ENCODE measurements at regions of chr2 and their contacts with region 1.

Region 1: GRCh38 chr2:96509114-96509846 is 4.1 kb upstream of the NEURL3 start:
- DNase-seq: peak in 8 of 9 experiments; percentile 35 to 73 (median 56)
- ATAC-seq: no peak
- H3K4me3 ChIP-seq: no peak overlapping the region
- H3K4me3 Mint-ChIP-seq: no peak overlapping the region
- H3K27ac ChIP-seq: no peak overlapping the region
- H3K27ac Mint-ChIP-seq: no peak overlapping the region
- H3K4me1 ChIP-seq: peaks cover 17% of the 10 kb centered on the region
- H3K4me1 Mint-ChIP-seq: peaks cover 10% of the 10 kb centered on the region
- H3K27me3 ChIP-seq: peaks cover 0 to 5% of the 10 kb centered on the region in 2 experiments
- H3K27me3 Mint-ChIP-seq: peaks cover 13% of the 10 kb centered on the region
- CTCF ChIP-seq: peak; percentile 45

Region 2: DNA sequence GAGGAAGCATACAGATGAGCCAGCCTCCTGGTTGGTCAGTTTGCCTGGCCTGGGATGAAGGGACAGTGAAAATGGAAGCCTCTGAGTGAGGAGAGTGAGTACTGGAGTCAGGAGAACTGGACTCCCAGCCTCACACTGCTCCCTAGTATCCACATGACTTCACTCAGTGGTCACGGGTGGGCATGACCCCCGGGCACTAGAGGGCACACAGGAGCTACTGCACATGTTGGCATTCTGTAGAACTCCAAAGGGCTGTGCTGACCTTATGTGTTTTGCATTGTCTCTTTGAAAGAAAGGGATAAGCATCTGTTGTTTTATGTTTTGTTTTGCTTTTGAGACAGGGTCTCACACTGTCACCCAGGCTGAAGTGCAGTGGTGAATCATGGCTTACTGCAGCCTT is 150.0 kb before region 1 on chr2:
- CTCF ChIA-PET with region 1: interaction called, 8 read pairs
- POLR2A ChIA-PET with region 1: no interaction called
- intact Hi-C with region 1: loop called in 1 of 2 experiments (anchors 1 kb)
- DNase-seq: peak; percentile 25 to 74 (median 58)
- ATAC-seq: peak; percentile 90
- H3K4me3 ChIP-seq: no peak overlapping the region
- H3K4me3 Mint-ChIP-seq: no peak overlapping the region
- H3K27ac ChIP-seq: no peak overlapping the region
- H3K27ac Mint-ChIP-seq: no peak overlapping the region
- H3K4me1 ChIP-seq: no peaks in the 10 kb centered on the region
- H3K4me1 Mint-ChIP-seq: peaks cover 3% of the 10 kb centered on the region
- H3K27me3 ChIP-seq: no peaks in the 10 kb centered on the region
- H3K27me3 Mint-ChIP-seq: no peaks in the 10 kb centered on the region
- CTCF ChIP-seq: no peak

Region 3: DNA sequence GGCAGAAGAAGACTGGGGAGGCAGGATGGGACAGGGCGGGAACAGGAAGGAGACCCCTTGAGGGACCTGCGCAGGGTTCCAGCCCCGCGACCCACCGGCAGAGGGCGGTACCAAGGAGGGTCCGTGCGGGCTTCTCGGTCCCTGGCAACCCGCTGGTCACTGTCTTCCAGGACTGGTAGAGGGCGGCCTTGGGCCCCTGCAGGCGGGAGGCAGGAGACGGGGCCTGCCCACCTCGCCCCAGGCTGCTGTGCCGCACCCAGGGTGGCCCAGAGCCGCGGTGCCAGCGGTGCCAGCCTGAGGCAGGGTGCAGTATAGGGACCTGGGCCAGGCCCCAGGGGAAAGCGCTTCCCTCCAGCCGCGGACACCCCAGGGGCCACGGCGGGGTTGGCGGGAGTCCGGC is 38.6 kb before region 1 on chr2:
- CTCF ChIA-PET with region 1: interaction called, 10 read pairs
- POLR2A ChIA-PET with region 1: no interaction called
- intact Hi-C with region 1: loop called (anchors 1 to 2 kb)
- DNase-seq: peak in 8 of 9 experiments; percentile 36 to 66 (median 58)
- ATAC-seq: peak; percentile 73
- H3K4me3 ChIP-seq: no peak overlapping the region
- H3K4me3 Mint-ChIP-seq: no peak overlapping the region
- H3K27ac ChIP-seq: no peak overlapping the region
- H3K27ac Mint-ChIP-seq: no peak overlapping the region
- H3K4me1 ChIP-seq: peaks cover 4% of the 10 kb centered on the region
- H3K4me1 Mint-ChIP-seq: peaks cover 2% of the 10 kb centered on the region
- H3K27me3 ChIP-seq: no peaks in the 10 kb centered on the region
- H3K27me3 Mint-ChIP-seq: peaks cover 6% of the 10 kb centered on the region
- CTCF ChIP-seq: peak; percentile 64

Region 4: DNA sequence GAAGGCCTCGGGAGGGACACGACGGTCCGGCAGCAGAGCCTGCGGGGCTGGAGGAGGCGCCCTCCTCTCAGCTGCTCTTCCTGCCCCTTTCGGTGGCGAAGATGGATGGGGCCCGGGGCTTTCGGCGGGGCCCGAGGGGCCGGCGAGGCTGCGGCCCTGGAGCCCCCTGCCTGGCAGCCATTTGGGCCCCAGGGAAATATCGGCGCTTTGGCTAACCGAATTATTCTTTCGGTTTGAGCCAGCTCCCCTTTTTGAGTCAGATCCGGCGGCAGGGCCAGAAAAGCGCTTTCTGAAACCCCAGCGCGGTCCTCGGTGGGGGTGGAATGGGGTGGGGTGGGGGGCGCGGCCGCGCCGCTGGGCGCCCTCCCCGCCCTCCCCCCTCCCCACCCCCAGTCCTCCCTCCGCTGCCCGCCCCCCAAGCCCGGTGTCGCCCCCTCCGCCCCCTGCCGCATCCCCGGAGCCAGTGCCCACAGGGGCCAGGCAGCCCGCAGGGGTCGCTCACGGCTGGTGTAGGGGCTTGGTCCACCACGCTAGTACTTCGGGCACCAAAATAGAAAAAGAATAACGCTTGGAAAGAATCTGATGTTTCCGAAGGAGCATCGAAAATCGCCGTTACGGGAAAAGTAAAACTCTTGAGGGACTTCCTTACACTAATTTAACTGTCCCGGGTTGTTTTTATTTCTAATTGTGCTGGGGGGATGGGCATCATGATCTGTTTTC is 18.2 kb after region 1 on chr2:
- CTCF ChIA-PET with region 1: interaction called, 38 read pairs
- POLR2A ChIA-PET with region 1: interaction called, 4 read pairs
- intact Hi-C with region 1: loop called in 1 of 2 experiments (anchors 2 kb)
- DNase-seq: peak in 7 of 9 experiments; percentile 40 to 77 (median 62)
- ATAC-seq: no peak
- H3K4me3 ChIP-seq: peak overlapping the region; percentile 61 to 63
- H3K4me3 Mint-ChIP-seq: peak overlapping the region; percentile 84
- H3K27ac ChIP-seq: peak overlapping the region; percentile 32 to 50
- H3K27ac Mint-ChIP-seq: peak overlapping the region; percentile 67
- H3K4me1 ChIP-seq: peaks cover 36% of the 10 kb centered on the region
- H3K4me1 Mint-ChIP-seq: peaks cover 43% of the 10 kb centered on the region
- H3K27me3 ChIP-seq: no peaks in the 10 kb centered on the region
- H3K27me3 Mint-ChIP-seq: no peaks in the 10 kb centered on the region
- CTCF ChIP-seq: peak; percentile 38